ENCODE measurements at regions of chr16 and their contacts with region 1.

Region 1: GRCh38 chr16:77987810-77988209 is 34.5 kb upstream of the CLEC3A start:
- DNase-seq: no peak

Region 2: GRCh38 chr16:77686385-77686784 is 301.4 kb before region 1 on chr16:
- intact Hi-C with region 1: loop called (anchors 5 kb)
- DNase-seq: no peak

Measured in posterior cingulate gyrus (tissue), 11 donors.